Caco-2 (cell line): ENCODE measurements at regions of chr22 and their contacts with region 1.

Region 1: DNA sequence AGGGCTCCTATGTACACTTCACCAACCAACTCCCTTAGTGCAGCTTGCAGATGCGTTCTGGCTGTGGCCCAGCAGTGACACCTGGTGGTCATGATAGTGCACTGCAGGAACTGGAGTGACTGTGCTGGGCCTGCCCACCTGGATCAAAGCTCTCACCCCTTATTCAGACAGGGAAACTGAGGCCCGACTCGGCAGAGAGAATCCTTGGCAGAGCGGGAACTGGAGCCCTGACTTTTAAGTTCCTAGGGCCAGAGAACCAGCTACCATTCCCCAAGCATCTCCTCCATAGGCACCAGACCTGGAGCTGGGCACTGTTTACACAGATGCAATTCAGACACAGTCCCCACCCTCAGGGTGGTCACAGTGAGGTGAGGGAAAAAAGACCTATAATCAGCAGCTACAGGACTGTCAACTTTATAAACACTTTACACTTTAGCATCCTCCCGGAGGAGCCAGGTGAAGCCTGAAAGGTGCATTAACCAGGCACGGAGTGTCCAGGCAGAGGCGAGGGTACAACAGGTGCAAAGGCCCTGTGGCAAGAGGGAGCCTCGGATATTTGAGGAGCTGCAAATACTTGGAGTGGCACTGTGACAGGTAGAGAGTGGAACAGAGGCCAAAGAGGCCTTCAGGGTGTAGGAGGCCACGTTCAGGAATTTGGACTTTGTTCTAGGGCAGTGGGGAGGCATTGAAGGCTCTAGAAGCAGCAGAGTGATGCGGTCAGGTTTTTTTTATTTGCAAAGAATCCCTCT is 22.0 kb downstream of the RHBDD3 start:
- DNase-seq: peak; percentile 79 to 80
- H3K4me3 ChIP-seq: no peak overlapping the region
- H3K4me3 Mint-ChIP-seq: peak overlapping the region; percentile 13
- H3K27ac Mint-ChIP-seq: peak overlapping the region; percentile 74
- H3K4me1 ChIP-seq: peaks cover 22% of the 10 kb centered on the region
- H3K4me1 Mint-ChIP-seq: peaks cover 14% of the 10 kb centered on the region
- H3K27me3 ChIP-seq: no peaks in the 10 kb centered on the region
- H3K27me3 Mint-ChIP-seq: no peaks in the 10 kb centered on the region
- CTCF ChIP-seq: peak; percentile 95 to 97

Region 2: DNA sequence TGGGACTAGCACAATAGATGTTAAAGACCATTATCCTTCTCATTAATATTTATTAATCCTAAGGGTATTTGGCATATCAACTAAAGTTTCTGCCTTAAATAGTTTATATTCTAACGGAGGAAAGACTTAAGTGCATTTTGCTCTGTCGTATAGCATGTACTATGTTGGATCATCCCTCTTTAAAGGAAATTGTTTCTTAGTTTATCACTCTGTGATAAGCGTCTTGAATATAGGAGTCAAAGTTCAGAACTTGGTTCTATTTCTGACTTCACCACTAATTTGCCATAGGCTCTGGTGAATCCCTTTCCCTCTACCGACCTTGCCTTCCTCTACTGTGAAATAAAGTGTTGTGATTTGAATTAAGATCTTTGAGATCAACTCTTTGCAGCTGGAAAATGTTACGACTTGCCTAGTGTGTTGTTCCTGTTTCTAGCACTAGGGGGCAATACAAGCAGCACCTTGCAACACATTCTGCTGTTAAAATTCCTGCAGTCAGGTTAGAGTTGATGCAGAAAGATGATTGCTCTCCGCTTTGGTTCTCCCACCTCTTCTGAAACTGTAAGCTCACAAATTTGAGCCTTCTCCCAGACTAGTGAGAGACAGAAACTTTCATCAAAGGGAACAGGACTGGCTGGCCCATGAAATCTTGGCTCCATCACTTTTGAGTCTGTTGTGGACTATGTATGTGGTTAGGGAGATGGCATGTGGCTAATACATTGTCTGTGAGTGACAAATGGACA is 390.3 kb before region 1 on chr22:
- CTCF ChIA-PET with region 1: interaction called, 4 read pairs
- POLR2A ChIA-PET with region 1: no interaction called
- intact Hi-C with region 1: loop called (anchors 10 kb)
- DNase-seq: peak; percentile 52 to 73
- H3K4me3 ChIP-seq: no peak overlapping the region
- H3K4me3 Mint-ChIP-seq: no peak overlapping the region
- H3K27ac Mint-ChIP-seq: no peak overlapping the region
- H3K4me1 ChIP-seq: peaks cover 10% of the 10 kb centered on the region
- H3K4me1 Mint-ChIP-seq: peaks cover 10% of the 10 kb centered on the region
- H3K27me3 ChIP-seq: no peaks in the 10 kb centered on the region
- H3K27me3 Mint-ChIP-seq: no peaks in the 10 kb centered on the region
- CTCF ChIP-seq: peak; percentile 89 to 91

Region 3: DNA sequence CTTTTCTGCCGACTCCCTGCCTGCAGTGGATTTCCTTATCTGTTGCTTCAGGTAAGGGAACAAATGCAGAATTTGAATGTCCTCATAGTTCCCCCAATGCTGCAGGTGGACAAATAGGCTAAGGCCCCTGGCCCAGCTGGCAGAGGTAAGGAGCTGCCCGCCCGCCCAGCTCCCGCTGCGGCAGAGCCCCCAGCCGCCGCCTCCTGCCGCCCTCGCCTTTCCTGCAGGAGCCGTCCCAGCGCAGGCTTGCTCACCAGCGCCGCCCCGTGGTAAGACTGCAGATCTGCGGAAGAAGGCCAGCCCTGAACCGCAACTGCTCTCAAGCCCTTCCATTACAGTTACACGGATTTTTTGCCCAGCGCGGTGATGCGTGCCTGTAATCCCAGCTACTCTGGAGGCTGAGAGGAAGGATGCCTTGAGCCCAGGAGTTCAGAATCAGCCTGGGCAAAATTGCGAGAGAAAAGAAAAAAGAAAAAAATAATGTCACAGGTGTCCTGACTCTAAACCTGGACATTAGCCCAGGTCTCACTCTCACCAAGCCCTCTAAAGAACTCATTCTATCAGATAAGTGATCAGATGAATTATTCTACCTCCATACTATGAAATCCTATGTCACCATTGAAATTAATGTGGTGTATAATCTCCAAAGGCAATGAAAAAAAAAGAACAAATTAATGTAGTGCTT is 91.3 kb before region 1 on chr22:
- CTCF ChIA-PET with region 1: interaction called, 9 read pairs
- POLR2A ChIA-PET with region 1: no interaction called
- intact Hi-C with region 1: loop called (anchors 1 kb)
- DNase-seq: peak; percentile 63 to 82
- H3K4me3 ChIP-seq: no peak overlapping the region
- H3K4me3 Mint-ChIP-seq: peak overlapping the region; percentile 41
- H3K27ac Mint-ChIP-seq: no peak overlapping the region
- H3K4me1 ChIP-seq: no peaks in the 10 kb centered on the region
- H3K4me1 Mint-ChIP-seq: peaks cover 10% of the 10 kb centered on the region
- H3K27me3 ChIP-seq: no peaks in the 10 kb centered on the region
- H3K27me3 Mint-ChIP-seq: no peaks in the 10 kb centered on the region
- CTCF ChIP-seq: peak; percentile 93 to 96

Region 4: DNA sequence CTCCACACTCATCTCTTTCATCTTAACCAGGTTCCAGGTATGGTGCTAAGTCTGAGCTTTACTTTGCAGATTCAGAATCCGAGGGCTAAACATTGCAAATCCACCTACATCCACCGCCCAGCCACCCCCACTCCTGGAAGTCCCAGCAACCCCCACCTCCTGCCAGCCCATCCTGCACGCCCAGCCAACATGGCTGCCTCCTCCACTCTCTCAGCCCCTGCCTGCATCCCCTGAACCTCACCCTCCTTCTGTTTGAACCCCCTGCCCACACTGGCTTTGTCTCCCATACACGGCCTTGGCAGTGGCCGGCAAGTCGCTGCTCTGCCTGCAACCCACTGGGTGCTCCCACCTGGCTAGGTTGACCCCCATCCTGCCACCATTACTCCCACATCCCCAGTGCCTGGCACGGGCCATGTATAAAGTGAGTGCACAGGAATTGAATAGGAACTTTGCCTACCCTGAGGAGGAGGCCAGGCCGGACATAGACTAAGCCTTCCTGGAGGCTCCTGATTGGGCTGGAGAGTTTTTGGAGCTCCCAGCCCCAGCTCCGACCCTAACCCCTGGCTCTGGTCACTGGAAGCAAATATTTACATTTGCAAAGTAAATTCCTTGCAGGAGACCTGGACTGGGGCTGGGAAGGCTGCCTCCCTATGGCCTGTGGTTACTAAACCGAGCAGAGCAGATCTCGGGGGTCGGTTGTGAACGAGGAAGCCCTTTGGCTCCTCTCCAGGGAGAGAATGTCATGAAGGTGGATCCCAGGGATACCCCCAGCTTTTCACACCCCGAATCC is 25.7 kb before region 1 on chr22:
- CTCF ChIA-PET with region 1: interaction called, 13 read pairs
- POLR2A ChIA-PET with region 1: no interaction called
- intact Hi-C with region 1: no loop called
- DNase-seq: peak; percentile 60 to 61
- H3K4me3 ChIP-seq: no peak overlapping the region
- H3K4me3 Mint-ChIP-seq: peak overlapping the region; percentile 49
- H3K27ac Mint-ChIP-seq: peak overlapping the region; percentile 87
- H3K4me1 ChIP-seq: peaks cover 17% of the 10 kb centered on the region
- H3K4me1 Mint-ChIP-seq: peaks cover 13% of the 10 kb centered on the region
- H3K27me3 ChIP-seq: no peaks in the 10 kb centered on the region
- H3K27me3 Mint-ChIP-seq: no peaks in the 10 kb centered on the region
- CTCF ChIP-seq: peak in 1 of 2 experiments; percentile 9

Region 5: DNA sequence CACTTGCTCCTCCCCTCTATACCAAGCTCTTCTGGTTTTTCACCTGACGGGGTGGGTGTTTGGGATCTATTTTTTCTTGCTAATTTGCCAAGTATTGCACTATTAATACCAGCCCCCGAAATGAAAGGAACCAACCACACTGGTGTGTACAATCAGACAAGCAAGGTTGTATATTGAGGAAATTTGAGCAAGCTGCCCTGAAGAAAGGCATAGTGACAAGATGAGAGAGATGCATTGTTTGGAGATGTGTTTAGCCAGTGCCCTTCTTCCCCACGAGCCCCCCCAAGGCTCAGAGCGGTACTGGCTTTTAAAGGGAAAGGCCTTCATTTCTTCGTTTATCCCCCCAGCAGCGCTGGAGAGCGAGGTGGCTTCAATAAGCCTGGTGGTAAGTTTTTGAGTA is 45.4 kb after region 1 on chr22:
- CTCF ChIA-PET with region 1: no interaction called
- POLR2A ChIA-PET with region 1: no interaction called
- intact Hi-C with region 1: no loop called
- DNase-seq: no peak
- H3K4me3 ChIP-seq: no peak overlapping the region
- H3K4me3 Mint-ChIP-seq: no peak overlapping the region
- H3K27ac Mint-ChIP-seq: peak overlapping the region; percentile 13
- H3K4me1 ChIP-seq: no peaks in the 10 kb centered on the region
- H3K4me1 Mint-ChIP-seq: no peaks in the 10 kb centered on the region
- H3K27me3 ChIP-seq: no peaks in the 10 kb centered on the region
- H3K27me3 Mint-ChIP-seq: no peaks in the 10 kb centered on the region
- CTCF ChIP-seq: no peak